ENCODE measurements at regions of chr7 and their contacts with region 1.

Region 1: DNA sequence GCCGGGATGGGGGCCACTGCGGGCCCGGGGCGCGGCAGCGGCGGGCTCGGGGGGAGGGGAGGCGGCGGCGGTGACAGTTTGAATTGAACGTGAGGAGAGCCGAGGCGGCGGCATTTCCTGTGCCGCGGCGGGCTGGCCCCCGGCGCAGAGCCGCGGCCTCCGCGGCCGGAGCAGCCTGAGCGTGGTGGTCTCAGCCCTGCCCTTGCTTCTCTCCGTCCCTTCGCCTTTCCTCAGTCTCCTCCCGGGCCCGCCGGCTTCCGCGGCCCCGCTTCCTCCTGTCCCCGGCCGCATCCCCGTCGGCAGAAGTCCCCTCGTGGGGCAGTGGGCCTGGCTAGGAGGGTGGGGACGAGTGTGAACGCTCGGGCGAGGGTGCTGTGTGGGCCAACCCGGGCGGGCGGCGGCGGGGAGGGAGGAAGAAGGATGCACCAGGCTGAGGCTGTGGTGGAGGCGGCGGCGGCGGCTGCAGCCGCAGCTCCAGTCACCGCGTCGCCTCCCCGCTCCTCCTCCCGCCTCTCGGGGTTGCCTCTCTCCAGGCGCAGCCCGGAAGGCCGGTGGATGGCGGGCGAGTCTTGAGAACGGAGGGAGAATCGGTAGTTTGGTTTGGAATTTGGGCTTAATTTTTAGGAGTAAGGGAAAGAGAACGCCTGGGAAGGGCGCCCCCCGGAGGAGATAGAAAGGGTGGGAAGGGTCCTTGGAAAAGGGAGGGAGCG is 690 bp downstream of the SEPTIN7 start:
- DNase-seq: peak; percentile 83
- ATAC-seq: peak; percentile 35
- H3K4me3 Mint-ChIP-seq: peak overlapping the region; percentile 97
- H3K27ac Mint-ChIP-seq: peak overlapping the region; percentile 99
- H3K4me1 Mint-ChIP-seq: peaks cover 43% of the 10 kb centered on the region
- H3K27me3 Mint-ChIP-seq: no peaks in the 10 kb centered on the region

Region 2: DNA sequence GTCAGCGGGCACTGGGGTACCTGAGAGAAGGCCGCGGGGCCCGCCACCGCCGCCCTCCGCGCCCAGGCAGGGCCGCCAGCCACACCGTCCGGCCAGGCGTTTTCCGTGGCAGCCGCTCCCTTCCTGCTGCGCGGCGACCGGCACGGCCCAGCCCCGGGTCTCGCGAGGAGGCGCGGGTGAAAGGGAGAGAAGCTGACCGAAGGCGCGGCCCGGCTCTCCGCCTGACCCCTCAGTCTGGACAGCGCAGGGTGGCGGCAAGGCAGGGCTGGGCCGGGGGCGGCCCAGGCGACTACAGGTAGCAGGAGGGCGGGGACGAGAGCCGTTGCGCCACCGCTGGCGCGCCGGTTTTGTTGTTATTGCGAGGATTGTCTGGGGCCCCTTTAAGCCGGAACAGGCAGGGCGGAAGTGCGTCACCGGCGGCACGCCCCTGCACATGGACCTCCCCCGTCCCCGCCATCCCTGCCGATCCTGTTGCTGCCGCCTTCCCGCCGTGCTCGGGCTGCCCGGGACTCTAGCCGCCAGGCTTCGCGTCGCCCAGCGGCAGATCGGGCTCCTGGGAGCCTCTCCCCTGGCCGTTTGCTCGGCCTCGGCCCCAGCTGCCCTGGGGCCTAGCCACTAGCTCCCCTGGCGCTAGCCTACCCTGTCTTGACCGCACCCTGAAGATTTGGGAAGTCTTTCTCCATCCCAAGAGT is 106.6 kb before region 1 on chr7 and contains the start of gene HERPUD2:
- CTCF ChIA-PET with region 1: interaction called, 8 read pairs
- POLR2A ChIA-PET with region 1: interaction called, 45 read pairs
- intact Hi-C with region 1: loop called (anchors 1 kb)
- DNase-seq: peak; percentile 96
- ATAC-seq: peak; percentile 77
- H3K4me3 Mint-ChIP-seq: peak within 1 kb of the TSS; percentile 97
- H3K27ac Mint-ChIP-seq: peak within 1 kb of the TSS; percentile 98
- H3K4me1 Mint-ChIP-seq: peaks cover 42% of the 10 kb centered on the region
- H3K27me3 Mint-ChIP-seq: no peaks in the 10 kb centered on the region
- total RNA-seq, gene HERPUD2: 22.1 to 26.7 TPM

Region 3: GRCh38 chr7:35723011-35723410 is 78.5 kb before region 1 on chr7:
- CTCF ChIA-PET with region 1: interaction called, 7 read pairs
- POLR2A ChIA-PET with region 1: interaction called, 5 read pairs
- intact Hi-C with region 1: loop called (anchors 1 to 2 kb)
- DNase-seq: peak; percentile 33
- ATAC-seq: peak; percentile 80
- H3K4me3 Mint-ChIP-seq: peak overlapping the region; percentile 32
- H3K27ac Mint-ChIP-seq: peak overlapping the region; percentile 90
- H3K4me1 Mint-ChIP-seq: peaks cover 55% of the 10 kb centered on the region
- H3K27me3 Mint-ChIP-seq: no peaks in the 10 kb centered on the region

Region 4: GRCh38 chr7:35839860-35840854 is 38.6 kb after region 1 on chr7:
- CTCF ChIA-PET with region 1: interaction called, 3 read pairs
- POLR2A ChIA-PET with region 1: interaction called, 3 read pairs
- intact Hi-C with region 1: loop called in 1 of 2 experiments (anchors 5 kb)
- DNase-seq: no peak
- ATAC-seq: peak; percentile 78
- H3K4me3 Mint-ChIP-seq: no peak overlapping the region
- H3K27ac Mint-ChIP-seq: no peak overlapping the region
- H3K4me1 Mint-ChIP-seq: peaks cover 43% of the 10 kb centered on the region
- H3K27me3 Mint-ChIP-seq: no peaks in the 10 kb centered on the region

Region 5: DNA sequence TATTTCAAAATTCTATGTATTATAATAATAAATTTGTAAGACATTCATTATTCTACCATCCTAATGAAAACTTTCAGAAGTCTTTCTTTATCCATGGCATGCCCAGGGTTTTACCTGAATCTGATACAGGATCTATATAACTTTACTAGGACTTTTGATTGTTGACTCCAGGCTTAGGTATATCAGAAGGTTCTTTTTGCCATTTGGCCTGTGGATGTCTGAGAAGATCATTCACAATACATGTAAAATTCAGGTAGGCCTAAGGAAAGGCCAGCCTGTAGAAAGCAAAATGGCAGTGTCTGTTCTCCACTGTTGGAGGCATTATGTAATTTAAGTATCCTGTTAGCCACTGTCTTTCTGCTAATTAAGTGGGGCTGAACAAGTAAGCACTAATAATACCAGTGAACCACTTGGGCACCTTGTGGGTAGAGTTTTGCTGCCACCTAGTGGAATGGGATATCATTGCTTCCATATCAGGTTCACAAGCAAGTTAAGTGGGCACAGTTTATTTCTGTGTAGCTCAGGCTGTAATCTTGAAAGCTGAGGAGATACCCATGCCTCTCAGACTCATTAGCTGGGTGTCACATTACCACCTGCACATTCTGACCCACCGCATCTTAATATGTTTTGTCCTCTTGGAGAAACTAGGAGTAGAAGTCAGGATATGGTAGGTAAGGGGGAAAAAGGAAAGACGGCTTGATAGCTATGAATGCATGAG is 104.8 kb after region 1 on chr7:
- CTCF ChIA-PET with region 1: interaction called, 4 read pairs
- POLR2A ChIA-PET with region 1: no interaction called
- intact Hi-C with region 1: loop called (anchors 2 to 5 kb)
- DNase-seq: peak; percentile 75
- ATAC-seq: peak; percentile 90
- H3K4me3 Mint-ChIP-seq: no peak overlapping the region
- H3K27ac Mint-ChIP-seq: no peak overlapping the region
- H3K4me1 Mint-ChIP-seq: peaks cover 2% of the 10 kb centered on the region
- H3K27me3 Mint-ChIP-seq: no peaks in the 10 kb centered on the region

Region 6: GRCh38 chr7:36152756-36153570 is 351.4 kb after region 1 on chr7 and contains the start of gene EEPD1:
- CTCF ChIA-PET with region 1: no interaction called
- POLR2A ChIA-PET with region 1: no interaction called
- intact Hi-C with region 1: loop called (anchors 1 to 2 kb)
- DNase-seq: peak; percentile 100
- ATAC-seq: peak; percentile 98
- H3K4me3 Mint-ChIP-seq: peak within 1 kb of the TSS; percentile 71
- H3K27ac Mint-ChIP-seq: peak within 1 kb of the TSS; percentile 43
- H3K4me1 Mint-ChIP-seq: peaks cover 29% of the 10 kb centered on the region
- H3K27me3 Mint-ChIP-seq: no peaks in the 10 kb centered on the region
- total RNA-seq, gene EEPD1: 1.3 TPM

Region 7: DNA sequence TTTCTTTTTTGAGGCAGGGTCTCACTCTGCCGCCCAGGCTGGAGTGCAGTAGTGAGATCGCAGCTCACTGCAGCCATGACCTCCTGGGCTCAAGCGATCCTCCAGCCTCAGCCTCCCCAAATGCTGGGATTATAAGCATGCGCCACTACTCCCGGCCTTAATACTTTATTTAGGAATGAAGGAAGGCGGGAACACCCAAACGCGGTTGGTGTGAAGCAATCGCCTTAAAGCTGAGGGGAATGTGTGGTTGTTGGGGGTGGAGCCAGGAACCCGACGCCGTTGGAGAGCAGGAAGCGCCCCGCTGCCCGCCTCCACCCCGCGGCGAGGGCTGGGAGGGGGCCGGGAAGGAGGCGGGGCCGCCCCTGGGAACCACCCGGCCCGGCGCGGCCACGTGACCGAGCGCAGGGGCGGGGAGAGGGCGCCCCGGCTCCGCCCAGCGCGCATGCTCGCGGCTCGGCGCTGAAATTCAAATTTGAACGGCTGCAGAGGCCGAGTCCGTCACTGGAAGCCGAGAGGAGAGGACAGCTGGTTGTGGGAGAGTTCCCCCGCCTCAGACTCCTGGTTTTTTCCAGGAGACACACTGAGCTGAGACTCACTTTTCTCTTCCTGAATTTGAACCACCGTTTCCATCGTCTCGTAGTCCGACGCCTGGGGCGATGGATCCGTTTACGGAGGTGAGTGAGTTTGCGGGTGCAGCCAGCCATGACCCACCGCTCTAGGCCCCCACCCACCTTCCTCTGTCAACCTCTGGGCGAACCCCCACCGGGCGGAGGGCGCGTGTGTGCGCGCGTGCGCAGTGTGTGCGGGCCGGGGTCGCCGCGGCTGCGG is 588.0 kb after region 1 on chr7 and contains the start of gene ANLN:
- CTCF ChIA-PET with region 1: no interaction called
- POLR2A ChIA-PET with region 1: no interaction called
- intact Hi-C with region 1: loop called in 1 of 2 experiments (anchors 1 kb)
- DNase-seq: peak; percentile 92
- ATAC-seq: peak; percentile 86
- H3K4me3 Mint-ChIP-seq: peak within 1 kb of the TSS; percentile 87
- H3K27ac Mint-ChIP-seq: peak within 1 kb of the TSS; percentile 83
- H3K4me1 Mint-ChIP-seq: peaks cover 26% of the 10 kb centered on the region
- H3K27me3 Mint-ChIP-seq: peaks cover 8% of the 10 kb centered on the region
- total RNA-seq, gene ANLN: 52.5 to 58.3 TPM

Measured in activated CD4-positive, alpha-beta T cell treated with anti-CD3 and anti-CD28 coated beads for 36 hours (primary cell).